CD4-positive, alpha-beta T cell (primary cell): ENCODE measurements at regions of chr22 and their contacts with region 1.

Region 1: GRCh38 chr22:41780746-41781505 is 19.6 kb upstream of the CCDC134 start:
- DNase-seq: peak; percentile 78 to 98 (median 88)
- ATAC-seq: peak; percentile 91
- H3K4me3 ChIP-seq: peak overlapping the region; percentile 69
- H3K4me3 Mint-ChIP-seq: peak overlapping the region; percentile 86
- H3K27ac ChIP-seq: peak overlapping the region; percentile 77 to 94
- H3K27ac Mint-ChIP-seq: peak overlapping the region; percentile 96
- H3K4me1 ChIP-seq: peaks cover 57% of the 10 kb centered on the region
- H3K4me1 Mint-ChIP-seq: peaks cover 54% of the 10 kb centered on the region
- H3K27me3 ChIP-seq: no peaks in the 10 kb centered on the region
- H3K27me3 Mint-ChIP-seq: no peaks in the 10 kb centered on the region
- CTCF ChIP-seq: no peak

Region 2: GRCh38 chr22:41181349-41182241 is 599.3 kb before region 1 on chr22:
- CTCF ChIA-PET with region 1: no interaction called
- POLR2A ChIA-PET with region 1: no interaction called
- intact Hi-C with region 1: no loop called
- DNase-seq: peak in 2 of 14 experiments; percentile 30 to 50
- ATAC-seq: no peak
- H3K4me3 ChIP-seq: no peak overlapping the region
- H3K4me3 Mint-ChIP-seq: no peak overlapping the region
- H3K27ac ChIP-seq: no peak overlapping the region
- H3K27ac Mint-ChIP-seq: peak overlapping the region; percentile 45
- H3K4me1 ChIP-seq: peaks cover 6% of the 10 kb centered on the region
- H3K4me1 Mint-ChIP-seq: no peaks in the 10 kb centered on the region
- H3K27me3 ChIP-seq: no peaks in the 10 kb centered on the region
- H3K27me3 Mint-ChIP-seq: no peaks in the 10 kb centered on the region
- CTCF ChIP-seq: no peak

Region 3: DNA sequence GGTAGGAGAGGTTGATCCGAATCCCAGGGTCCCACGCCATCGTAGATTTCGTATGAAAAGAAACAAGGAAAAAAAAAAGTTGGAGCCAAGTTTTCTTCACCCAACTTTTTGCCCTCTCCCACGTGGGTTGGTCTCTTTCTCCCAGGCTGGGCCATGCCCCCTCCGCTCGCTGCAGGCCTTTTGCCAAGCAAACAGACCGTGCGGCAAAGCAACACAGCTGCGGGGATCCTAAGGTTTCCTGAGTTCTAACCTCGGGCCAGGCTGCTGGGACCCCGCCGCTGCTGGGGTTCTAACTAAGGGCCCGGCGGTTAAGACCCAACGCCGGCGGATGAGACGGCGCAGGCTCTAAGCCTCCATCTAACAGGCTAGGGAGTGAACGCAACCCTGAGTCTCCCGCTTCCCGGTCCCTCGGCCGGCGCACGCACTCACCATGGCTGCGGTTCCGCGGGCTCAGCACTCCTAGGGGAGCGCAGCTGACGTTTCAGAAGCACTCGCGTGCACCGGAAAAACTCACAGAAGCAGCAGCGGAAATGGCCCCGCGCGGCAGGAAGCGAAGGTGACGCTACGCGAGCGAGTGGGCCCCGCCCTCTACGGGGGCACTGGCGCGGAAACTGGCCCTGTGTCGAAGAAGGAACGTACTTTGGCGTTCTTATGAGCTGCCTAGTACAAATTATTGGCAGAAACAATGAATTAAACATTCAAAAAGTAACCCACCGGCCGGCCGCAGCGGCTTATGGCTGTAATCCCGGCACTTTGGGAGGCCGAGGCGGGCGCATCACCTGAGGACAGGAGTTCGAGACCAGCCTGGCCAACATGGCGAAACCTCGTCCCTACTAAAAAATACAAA is 92.3 kb before region 1 on chr22 and contains the start of gene SNU13:
- CTCF ChIA-PET with region 1: no interaction called
- POLR2A ChIA-PET with region 1: interaction called, 36 read pairs
- intact Hi-C with region 1: loop called in 1 of 2 experiments (anchors 2 kb)
- DNase-seq: peak; percentile 87 to 97 (median 90)
- ATAC-seq: peak; percentile 92
- H3K4me3 ChIP-seq: peak within 1 kb of the TSS; percentile 91
- H3K4me3 Mint-ChIP-seq: peak within 1 kb of the TSS; percentile 96
- H3K27ac ChIP-seq: peak within 1 kb of the TSS; percentile 95 to 98
- H3K27ac Mint-ChIP-seq: peak within 1 kb of the TSS; percentile 99
- H3K4me1 ChIP-seq: peaks cover 39% of the 10 kb centered on the region
- H3K4me1 Mint-ChIP-seq: peaks cover 45% of the 10 kb centered on the region
- H3K27me3 ChIP-seq: no peaks in the 10 kb centered on the region
- H3K27me3 Mint-ChIP-seq: no peaks in the 10 kb centered on the region
- CTCF ChIP-seq: no peak
- total RNA-seq, gene SNU13: 134 to 140 TPM

Region 4: DNA sequence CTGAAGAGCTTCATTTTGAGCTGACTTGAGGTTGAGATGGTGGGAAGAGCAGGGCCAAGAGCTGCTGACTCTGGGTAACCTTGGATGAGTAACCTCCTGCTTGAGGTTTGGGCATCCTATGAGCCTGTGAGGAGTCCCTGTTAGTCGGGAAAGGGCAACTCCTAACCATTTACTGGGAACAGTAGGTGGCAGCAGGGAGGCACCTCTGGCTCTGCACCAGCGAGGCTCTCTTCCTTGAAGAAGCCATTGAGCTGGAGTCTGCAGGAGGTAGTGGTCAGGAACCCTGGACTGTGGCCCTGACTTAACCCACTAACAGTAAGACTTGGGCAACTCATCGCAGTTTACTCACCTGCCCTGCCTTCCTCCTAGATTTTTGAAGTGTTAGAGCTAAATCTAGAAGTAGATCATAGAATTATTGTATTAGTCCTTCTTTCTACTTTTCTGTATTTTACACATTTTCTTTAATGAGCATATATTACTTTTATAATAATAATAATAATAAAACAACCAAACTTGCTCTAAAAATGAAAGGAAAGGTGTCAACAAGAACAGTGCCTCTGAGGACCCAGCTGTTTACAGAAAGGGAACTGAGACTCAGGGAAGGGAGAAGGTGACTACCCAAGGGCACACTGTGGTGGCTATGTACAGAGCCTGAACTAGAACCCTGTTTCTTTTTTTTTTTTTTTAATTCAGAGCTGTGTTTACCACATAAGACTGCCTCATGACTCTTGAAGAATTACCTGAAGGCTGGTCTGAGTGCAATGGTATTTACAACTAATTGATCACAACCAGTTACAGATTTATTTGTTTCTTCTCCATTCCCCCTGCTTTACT is 34.1 kb before region 1 on chr22:
- CTCF ChIA-PET with region 1: interaction called, 22 read pairs
- POLR2A ChIA-PET with region 1: interaction called, 11 read pairs
- intact Hi-C with region 1: no loop called
- DNase-seq: peak; percentile 29 to 81 (median 44)
- ATAC-seq: peak; percentile 90
- H3K4me3 ChIP-seq: no peak overlapping the region
- H3K4me3 Mint-ChIP-seq: no peak overlapping the region
- H3K27ac ChIP-seq: no peak overlapping the region
- H3K27ac Mint-ChIP-seq: no peak overlapping the region
- H3K4me1 ChIP-seq: peaks cover 5% of the 10 kb centered on the region
- H3K4me1 Mint-ChIP-seq: no peaks in the 10 kb centered on the region
- H3K27me3 ChIP-seq: no peaks in the 10 kb centered on the region
- H3K27me3 Mint-ChIP-seq: peaks cover 10% of the 10 kb centered on the region
- CTCF ChIP-seq: peak; percentile 81

Region 5: GRCh38 chr22:41873391-41873790 is 92.5 kb after region 1 on chr22:
- CTCF ChIA-PET with region 1: no interaction called
- POLR2A ChIA-PET with region 1: no interaction called
- intact Hi-C with region 1: no loop called
- DNase-seq: peak in 5 of 14 experiments; percentile 31 to 72 (median 69)
- ATAC-seq: peak; percentile 80
- H3K4me3 ChIP-seq: no peak overlapping the region
- H3K4me3 Mint-ChIP-seq: peak overlapping the region; percentile 46
- H3K27ac ChIP-seq: peak overlapping the region; percentile 39 to 46
- H3K27ac Mint-ChIP-seq: peak overlapping the region; percentile 89
- H3K4me1 ChIP-seq: peaks cover 15% of the 10 kb centered on the region
- H3K4me1 Mint-ChIP-seq: peaks cover 29% of the 10 kb centered on the region
- H3K27me3 ChIP-seq: no peaks in the 10 kb centered on the region
- H3K27me3 Mint-ChIP-seq: no peaks in the 10 kb centered on the region
- CTCF ChIP-seq: no peak

Region 6: DNA sequence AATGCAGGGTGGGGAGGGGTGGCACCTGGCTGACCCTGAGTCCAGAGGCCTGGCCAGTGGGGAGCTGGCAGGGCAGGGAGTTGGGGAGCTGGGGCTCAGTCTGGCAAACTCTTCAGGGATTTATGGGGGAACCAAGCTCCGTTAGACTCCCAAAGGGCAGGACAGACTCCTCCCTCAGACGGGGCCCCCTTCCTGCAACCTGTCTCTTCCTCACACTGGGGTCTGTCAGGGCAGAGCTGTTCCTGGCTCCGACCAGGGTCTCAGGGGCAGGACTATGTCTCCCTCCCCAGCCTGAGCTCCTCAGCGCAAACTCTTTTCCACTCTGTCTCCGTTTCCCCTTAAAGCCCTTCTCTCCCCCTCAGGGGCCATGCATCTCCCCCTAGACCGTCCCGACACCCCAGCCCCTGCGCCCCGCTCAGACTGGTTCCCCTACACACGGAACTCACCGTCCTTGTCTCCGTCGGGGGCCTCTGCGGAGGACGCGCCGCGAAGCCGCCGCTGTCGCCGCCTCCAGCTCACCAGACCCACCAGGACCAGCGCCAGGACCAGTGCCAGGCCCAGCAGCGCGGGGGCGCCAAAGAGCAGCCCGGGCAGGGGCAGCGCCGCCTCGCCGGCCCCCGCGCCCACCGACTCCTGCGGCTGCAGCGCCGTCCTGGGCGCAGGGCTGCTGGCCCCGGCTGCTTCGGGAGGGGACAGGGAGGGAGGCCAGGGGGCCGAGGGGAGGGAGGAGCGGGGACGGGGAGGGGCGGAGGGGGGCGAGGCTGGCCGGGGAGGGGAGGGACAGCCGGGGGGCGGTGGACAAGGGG is 144.9 kb after region 1 on chr22:
- CTCF ChIA-PET with region 1: no interaction called
- POLR2A ChIA-PET with region 1: interaction called, 13 read pairs
- intact Hi-C with region 1: no loop called
- DNase-seq: peak; percentile 59 to 88 (median 76)
- ATAC-seq: peak; percentile 84
- H3K4me3 ChIP-seq: peak overlapping the region; percentile 45
- H3K4me3 Mint-ChIP-seq: peak overlapping the region; percentile 80
- H3K27ac ChIP-seq: no peak overlapping the region
- H3K27ac Mint-ChIP-seq: peak overlapping the region; percentile 55
- H3K4me1 ChIP-seq: peaks cover 30% of the 10 kb centered on the region
- H3K4me1 Mint-ChIP-seq: peaks cover 7% of the 10 kb centered on the region
- H3K27me3 ChIP-seq: peaks cover 0 to 9% of the 10 kb centered on the region in 2 experiments
- H3K27me3 Mint-ChIP-seq: peaks cover 9% of the 10 kb centered on the region
- CTCF ChIP-seq: peak; percentile 75

Region 7: DNA sequence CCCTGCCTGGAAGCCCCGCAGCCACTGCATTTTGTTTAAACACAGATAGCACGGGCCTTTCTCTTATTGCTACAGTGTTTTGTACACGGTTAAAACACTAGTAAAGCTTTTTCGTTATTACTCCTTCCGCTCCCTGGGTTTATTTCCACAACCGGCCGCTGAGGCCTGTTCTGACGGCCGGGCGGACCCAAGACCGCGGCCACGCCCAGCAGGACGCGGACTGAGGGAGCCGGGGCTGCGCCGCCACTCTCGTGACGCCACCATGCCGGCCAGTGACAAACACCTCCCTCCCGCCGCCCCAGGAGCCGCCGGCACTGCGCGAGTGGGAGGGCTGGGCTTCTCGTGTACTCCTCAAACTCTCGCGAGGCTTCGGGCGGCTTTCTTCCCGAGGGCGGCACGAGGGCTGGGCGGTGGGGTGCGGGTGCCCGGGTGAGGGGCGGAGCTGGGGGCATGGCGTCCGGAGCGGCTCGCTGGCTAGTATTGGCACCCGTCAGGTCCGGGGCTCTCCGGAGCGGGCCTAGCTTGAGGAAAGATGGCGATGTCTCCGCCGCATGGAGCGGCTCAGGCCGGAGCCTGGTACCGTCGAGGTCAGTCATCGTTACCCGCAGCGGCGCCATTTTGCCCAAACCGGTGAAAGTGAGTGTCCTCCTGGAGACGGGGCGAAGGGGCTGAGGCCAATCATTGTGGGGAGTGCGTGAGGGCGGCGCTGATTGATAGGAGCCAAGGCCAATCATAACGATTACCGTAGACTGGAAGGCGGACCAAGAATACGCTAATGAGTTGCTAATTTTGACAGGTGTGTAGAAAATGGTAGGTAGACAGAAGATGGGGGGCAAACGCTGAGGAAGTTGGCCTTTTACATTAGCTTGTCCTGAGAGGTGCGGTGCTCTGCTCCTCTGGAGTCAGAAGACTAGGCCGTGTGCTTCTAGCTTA is 298.7 kb after region 1 on chr22 and contains the start of gene SMDT1:
- CTCF ChIA-PET with region 1: no interaction called
- POLR2A ChIA-PET with region 1: interaction called, 10 read pairs
- intact Hi-C with region 1: no loop called
- DNase-seq: peak; percentile 96 to 99 (median 98)
- ATAC-seq: peak; percentile 91
- H3K4me3 ChIP-seq: peak within 1 kb of the TSS; percentile 73
- H3K4me3 Mint-ChIP-seq: peak within 1 kb of the TSS; percentile 93
- H3K27ac ChIP-seq: peak within 1 kb of the TSS; percentile 98 to 99
- H3K27ac Mint-ChIP-seq: peak within 1 kb of the TSS; percentile 97
- H3K4me1 ChIP-seq: peaks cover 50% of the 10 kb centered on the region
- H3K4me1 Mint-ChIP-seq: peaks cover 56% of the 10 kb centered on the region
- H3K27me3 ChIP-seq: no peaks in the 10 kb centered on the region
- H3K27me3 Mint-ChIP-seq: no peaks in the 10 kb centered on the region
- CTCF ChIP-seq: no peak
- total RNA-seq, gene SMDT1: 84.7 to 86.4 TPM